T-cell (primary cell): ENCODE measurements at regions of chr5 and their contacts with region 1.

Region 1: DNA sequence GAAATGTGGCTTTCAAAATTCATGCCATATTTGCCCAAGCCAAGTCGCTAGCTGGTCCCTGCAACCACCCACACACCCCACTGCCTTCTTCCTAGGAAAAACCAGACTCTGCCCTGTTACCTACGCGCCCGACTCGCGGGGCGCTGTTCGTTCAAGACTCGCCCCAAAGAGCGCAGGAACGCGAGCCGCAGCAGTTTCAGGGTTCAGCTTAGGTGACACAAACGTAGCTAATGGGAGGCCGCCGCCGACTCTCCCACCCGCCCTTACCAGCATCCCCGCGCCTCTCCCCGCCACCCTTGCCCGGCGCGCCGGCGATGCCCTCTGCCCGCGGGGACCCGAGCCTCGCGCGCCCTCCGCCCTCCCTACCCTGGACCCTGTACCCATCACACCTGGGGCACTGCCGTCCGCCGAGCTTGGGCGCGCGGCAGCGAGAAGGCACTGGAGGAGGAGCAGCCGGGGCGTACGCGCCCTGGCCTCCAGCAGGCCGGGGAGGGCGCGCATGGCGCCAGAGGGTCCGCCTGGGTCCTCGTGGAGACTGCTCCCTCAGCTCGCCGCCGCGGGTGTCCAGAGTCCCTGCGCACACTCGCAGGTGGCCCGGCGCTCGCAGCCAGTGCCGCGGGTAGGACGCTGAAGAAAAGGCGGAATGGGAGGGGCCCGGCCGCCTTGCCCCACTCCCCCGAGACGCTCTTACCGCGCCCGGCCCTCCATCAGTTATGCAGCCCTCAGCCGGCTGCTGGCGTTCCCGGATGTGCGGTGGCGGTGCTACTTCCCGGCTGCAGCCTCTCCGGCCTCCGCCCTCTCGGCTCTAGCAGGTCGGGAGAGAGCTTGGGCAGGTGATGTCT is at the start of gene EMB:
- DNase-seq: peak; percentile 72 to 88 (median 78)
- ATAC-seq: peak; percentile 77 to 80 (median 78)
- H3K4me3 ChIP-seq: peak within 1 kb of the TSS; percentile 75 to 88
- H3K4me3 Mint-ChIP-seq: peak within 1 kb of the TSS; percentile 94 to 96 (median 96)
- H3K27ac ChIP-seq: peak within 1 kb of the TSS; percentile 97
- H3K27ac Mint-ChIP-seq: peak within 1 kb of the TSS; percentile 97 to 99
- H3K4me1 ChIP-seq: peaks cover 27 to 34% of the 10 kb centered on the region in 2 experiments
- H3K4me1 Mint-ChIP-seq: peaks cover 77 to 81% (median 78%) of the 10 kb centered on the region in 3 donors
- H3K27me3 ChIP-seq: no peaks in the 10 kb centered on the region
- H3K27me3 Mint-ChIP-seq: no peaks in the 10 kb centered on the region
- total RNA-seq, gene EMB: 148 to 210 (median 176) TPM

Region 2: DNA sequence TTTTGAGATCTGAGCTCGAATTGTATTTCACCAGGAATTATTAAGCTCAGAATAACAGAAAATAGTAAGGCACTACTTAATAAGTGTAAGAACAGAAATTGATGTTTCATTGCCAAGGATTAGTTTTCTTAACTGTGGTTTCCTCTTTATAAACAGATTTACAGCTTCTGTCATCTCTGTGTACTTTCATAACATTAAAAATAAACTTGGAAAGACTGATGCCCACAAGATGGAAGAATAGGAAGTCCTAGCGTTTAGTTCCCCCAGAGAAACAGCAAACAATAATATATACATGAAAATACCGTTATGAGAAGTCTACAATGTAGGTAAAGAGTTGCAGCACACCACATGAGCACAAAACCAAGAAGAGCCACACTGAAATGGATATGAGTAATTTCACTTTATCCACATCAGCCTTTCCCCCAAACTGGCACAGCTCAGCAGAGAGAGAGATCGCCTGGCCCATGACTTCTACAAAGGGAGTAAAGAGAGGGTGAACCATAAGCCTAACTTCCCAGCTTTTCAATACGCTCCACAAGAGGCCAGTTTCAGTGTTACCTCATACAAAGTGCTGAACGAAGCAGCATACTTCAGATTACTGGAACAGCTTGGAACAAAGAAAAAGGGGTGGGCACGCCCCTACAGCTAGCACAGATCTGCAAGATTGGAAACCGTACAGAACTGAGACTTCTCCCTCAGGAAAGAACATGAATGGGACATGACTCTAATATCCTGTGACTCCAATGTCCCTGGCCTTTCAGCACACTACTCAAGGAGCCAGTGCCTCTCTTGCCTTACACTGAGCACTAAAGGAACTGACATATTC is 75.2 kb before region 1 on chr5:
- CTCF ChIA-PET with region 1: no interaction called
- POLR2A ChIA-PET with region 1: interaction called in 1 of 2 experiments, 10 read pairs
- DNase-seq: no peak
- ATAC-seq: no peak
- H3K4me3 ChIP-seq: no peak overlapping the region
- H3K4me3 Mint-ChIP-seq: no peak overlapping the region
- H3K27ac ChIP-seq: no peak overlapping the region
- H3K27ac Mint-ChIP-seq: peak overlapping the region; percentile 84 to 86
- H3K4me1 ChIP-seq: peaks cover 4 to 17% of the 10 kb centered on the region in 2 experiments
- H3K4me1 Mint-ChIP-seq: peaks cover 31 to 43% (median 39%) of the 10 kb centered on the region in 3 donors
- H3K27me3 ChIP-seq: no peaks in the 10 kb centered on the region
- H3K27me3 Mint-ChIP-seq: no peaks in the 10 kb centered on the region

Region 3: GRCh38 chr5:50606179-50606578 is 165.3 kb after region 1 on chr5:
- CTCF ChIA-PET with region 1: no interaction called
- POLR2A ChIA-PET with region 1: interaction called in 1 of 2 experiments, 15 read pairs
- DNase-seq: no peak
- ATAC-seq: no peak
- H3K4me3 ChIP-seq: no peak overlapping the region
- H3K4me3 Mint-ChIP-seq: no peak overlapping the region
- H3K27ac ChIP-seq: no peak overlapping the region
- H3K27ac Mint-ChIP-seq: no peak overlapping the region
- H3K4me1 ChIP-seq: peaks cover 0 to 9% of the 10 kb centered on the region in 2 experiments
- H3K4me1 Mint-ChIP-seq: peaks cover 14 to 24% (median 18%) of the 10 kb centered on the region in 3 donors
- H3K27me3 ChIP-seq: no peaks in the 10 kb centered on the region
- H3K27me3 Mint-ChIP-seq: no peaks in the 10 kb centered on the region

Region 4: DNA sequence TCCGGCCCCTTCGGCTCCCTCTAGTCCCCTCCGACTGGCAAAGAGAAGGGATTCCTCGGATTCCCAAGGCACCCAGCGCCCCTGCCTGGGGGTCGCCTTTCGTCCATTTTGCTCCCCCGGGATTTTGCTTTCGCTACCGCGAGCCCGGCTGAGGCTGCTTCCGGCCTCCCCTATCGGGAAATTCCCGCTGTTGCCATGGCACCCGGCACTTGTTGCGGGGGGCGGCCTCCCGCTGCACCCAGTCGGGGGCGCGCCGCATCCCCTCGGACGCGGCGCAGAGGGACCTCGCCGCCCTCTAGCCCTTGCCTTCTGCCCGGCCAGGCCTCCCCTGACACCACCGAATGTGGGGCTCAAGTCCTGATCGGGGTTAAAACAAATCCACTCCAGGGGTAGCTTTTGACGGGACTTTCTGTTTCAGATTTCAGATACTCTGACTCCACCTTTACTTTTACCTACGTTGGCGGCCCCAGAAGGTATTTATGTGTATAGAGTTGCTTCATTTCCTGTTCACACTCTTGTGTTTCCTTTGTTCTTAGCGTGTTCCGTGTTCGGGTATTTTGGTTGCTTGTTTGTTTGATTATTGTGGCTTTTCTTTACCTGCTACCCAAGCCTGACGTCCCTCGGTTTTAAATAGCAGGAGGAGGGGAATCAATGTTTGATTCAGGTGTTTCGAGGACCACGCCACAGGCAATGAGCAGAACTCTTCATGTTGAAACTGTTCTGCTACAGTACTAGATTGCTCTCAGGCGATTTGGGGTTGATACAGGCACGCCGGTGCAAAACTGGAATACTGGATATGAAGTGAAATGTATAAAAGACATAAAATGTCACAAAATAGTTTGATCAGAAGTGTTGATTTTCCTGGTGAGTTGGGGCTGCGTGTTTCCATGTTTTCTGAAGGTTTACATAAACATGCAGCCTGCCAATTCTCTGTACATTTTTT is 227.1 kb after region 1 on chr5:
- CTCF ChIA-PET with region 1: interaction called in 1 of 2 experiments, 3 read pairs
- POLR2A ChIA-PET with region 1: interaction called in 1 of 2 experiments, 17 read pairs
- DNase-seq: peak; percentile 75 to 92 (median 84)
- ATAC-seq: peak; percentile 70 to 83 (median 74)
- H3K4me3 ChIP-seq: peak overlapping the region; percentile 90 to 98
- H3K4me3 Mint-ChIP-seq: peak overlapping the region; percentile 96 to 99 (median 99)
- H3K27ac ChIP-seq: peak overlapping the region; percentile 100
- H3K27ac Mint-ChIP-seq: peak overlapping the region; percentile 100
- H3K4me1 ChIP-seq: peaks cover 31 to 33% of the 10 kb centered on the region in 2 experiments
- H3K4me1 Mint-ChIP-seq: peaks cover 65 to 73% (median 70%) of the 10 kb centered on the region in 3 donors
- H3K27me3 ChIP-seq: no peaks in the 10 kb centered on the region
- H3K27me3 Mint-ChIP-seq: no peaks in the 10 kb centered on the region

Region 5: DNA sequence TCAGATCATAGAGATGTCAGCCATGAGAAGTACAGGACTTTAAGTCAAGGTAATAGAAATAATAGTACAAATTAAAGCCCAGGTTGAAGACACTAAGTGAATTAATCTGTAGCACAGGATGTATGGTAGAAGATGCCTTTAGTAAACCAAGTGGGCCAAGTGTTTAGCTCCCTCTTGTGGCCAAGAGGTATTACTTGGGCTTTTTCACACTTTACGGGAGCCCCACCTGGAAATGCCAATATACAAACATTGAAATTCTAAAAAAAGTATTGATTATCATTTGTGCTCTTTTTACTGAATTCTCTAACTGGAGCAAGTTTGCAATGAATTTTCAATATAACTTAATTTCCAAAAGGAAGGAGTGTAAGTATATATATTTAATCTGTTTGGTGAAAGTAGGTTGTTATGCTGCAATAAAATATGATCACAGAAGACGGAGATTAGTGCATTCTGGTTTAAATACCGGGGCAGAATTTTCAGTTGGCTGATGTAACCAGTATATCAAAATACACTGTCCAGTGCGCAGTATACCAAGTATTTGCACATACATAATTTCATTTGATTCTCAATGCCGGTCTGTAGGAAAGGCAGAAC is 310.3 kb after region 1 on chr5:
- CTCF ChIA-PET with region 1: interaction called, 6 to 12 read pairs
- POLR2A ChIA-PET with region 1: interaction called in 1 of 2 experiments, 4 read pairs
- DNase-seq: peak in 27 of 35 experiments; percentile 16 to 84 (median 40)
- ATAC-seq: peak; percentile 79 to 87 (median 84)
- H3K4me3 ChIP-seq: no peak overlapping the region
- H3K4me3 Mint-ChIP-seq: peak overlapping the region in 2 of 3 donors; percentile 37 to 39
- H3K27ac ChIP-seq: peak overlapping the region; percentile 68
- H3K27ac Mint-ChIP-seq: peak overlapping the region; percentile 71 to 90
- H3K4me1 ChIP-seq: peaks cover 7 to 22% of the 10 kb centered on the region in 2 experiments
- H3K4me1 Mint-ChIP-seq: peaks cover 63 to 70% (median 65%) of the 10 kb centered on the region in 3 donors
- H3K27me3 ChIP-seq: no peaks in the 10 kb centered on the region
- H3K27me3 Mint-ChIP-seq: no peaks in the 10 kb centered on the region

Region 6: GRCh38 chr5:50759526-50760270 is 318.8 kb after region 1 on chr5:
- CTCF ChIA-PET with region 1: no interaction called
- POLR2A ChIA-PET with region 1: interaction called in 1 of 2 experiments, 13 read pairs
- DNase-seq: no peak
- ATAC-seq: no peak
- H3K4me3 ChIP-seq: no peak overlapping the region
- H3K4me3 Mint-ChIP-seq: no peak overlapping the region
- H3K27ac ChIP-seq: no peak overlapping the region
- H3K27ac Mint-ChIP-seq: peak overlapping the region in 1 of 2 donors; percentile 7
- H3K4me1 ChIP-seq: no peaks in the 10 kb centered on the region
- H3K4me1 Mint-ChIP-seq: peaks cover 31 to 58% (median 51%) of the 10 kb centered on the region in 3 donors
- H3K27me3 ChIP-seq: no peaks in the 10 kb centered on the region
- H3K27me3 Mint-ChIP-seq: no peaks in the 10 kb centered on the region

Region 7: DNA sequence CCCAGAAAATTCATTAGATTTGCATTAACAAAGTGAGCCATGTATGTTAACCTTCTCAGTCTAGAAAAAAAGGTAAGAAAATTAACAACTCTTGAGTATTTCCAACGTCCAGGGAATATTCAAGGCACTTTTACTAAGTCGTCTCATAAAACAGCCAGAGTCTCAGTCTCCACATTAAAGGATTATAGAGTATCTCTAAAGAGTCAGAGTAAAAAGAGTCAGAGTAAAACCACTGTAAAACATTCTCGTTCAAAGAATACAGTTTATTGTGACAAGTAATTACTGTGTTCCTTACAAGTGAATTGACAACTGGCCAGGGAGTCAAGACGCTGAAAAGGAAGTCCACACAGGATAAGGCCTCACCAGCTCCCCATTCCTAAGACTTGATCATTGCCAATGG is 845.2 kb after region 1 on chr5:
- CTCF ChIA-PET with region 1: no interaction called
- POLR2A ChIA-PET with region 1: no interaction called
- DNase-seq: no peak
- ATAC-seq: no peak
- H3K4me3 ChIP-seq: no peak overlapping the region
- H3K4me3 Mint-ChIP-seq: no peak overlapping the region
- H3K27ac ChIP-seq: no peak overlapping the region
- H3K27ac Mint-ChIP-seq: no peak overlapping the region
- H3K4me1 ChIP-seq: no peaks in the 10 kb centered on the region
- H3K4me1 Mint-ChIP-seq: no peaks in the 10 kb centered on the region
- H3K27me3 ChIP-seq: no peaks in the 10 kb centered on the region
- H3K27me3 Mint-ChIP-seq: no peaks in the 10 kb centered on the region